ENCODE measurements at regions of chr3 and their contacts with region 1.

Region 1: GRCh38 chr3:152524198-152525140 is 255.7 kb downstream of the MBNL1 start:
- DNase-seq: peak; percentile 73
- H3K4me3 ChIP-seq: no peak overlapping the region
- H3K27ac ChIP-seq: no peak overlapping the region
- H3K4me1 ChIP-seq: no peaks in the 10 kb centered on the region
- H3K27me3 ChIP-seq: no peaks in the 10 kb centered on the region
- CTCF ChIP-seq: peak; percentile 48 to 54
- POLR2A ChIP-seq: no peak

Region 2: DNA sequence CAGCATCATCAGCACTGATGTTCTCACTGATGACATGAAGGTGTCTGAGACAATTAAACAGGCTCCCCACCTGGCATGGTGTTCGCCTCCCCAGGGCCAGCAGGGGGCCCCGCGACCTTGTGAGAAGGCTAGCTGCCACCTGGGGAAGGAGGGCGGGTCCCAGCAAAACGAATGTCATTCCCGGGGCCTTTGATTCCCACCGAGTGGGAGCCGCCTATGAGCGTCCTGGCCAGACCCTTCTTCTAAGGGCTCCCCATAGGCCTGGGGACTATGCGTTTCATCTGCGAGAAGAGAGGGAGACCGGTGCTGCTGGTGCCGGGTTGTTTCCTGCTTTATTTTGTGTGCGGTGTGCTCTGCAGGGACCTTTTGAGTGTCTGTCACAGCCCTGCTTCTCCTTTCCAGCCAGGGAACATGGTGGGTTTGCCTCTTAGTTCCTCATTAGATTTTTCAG is 1598.7 kb before region 1 on chr3:
- CTCF ChIA-PET with region 1: no interaction called
- POLR2A ChIA-PET with region 1: no interaction called
- dilution Hi-C with region 1: no loop called
- intact Hi-C with region 1: no loop called
- DNase-seq: peak; percentile 16
- H3K4me3 ChIP-seq: no peak overlapping the region
- H3K27ac ChIP-seq: no peak overlapping the region
- H3K4me1 ChIP-seq: no peaks in the 10 kb centered on the region
- H3K27me3 ChIP-seq: peaks cover 5 to 11% of the 10 kb centered on the region in 2 experiments
- CTCF ChIP-seq: peak; percentile 62 to 73
- POLR2A ChIP-seq: no peak

Region 3: DNA sequence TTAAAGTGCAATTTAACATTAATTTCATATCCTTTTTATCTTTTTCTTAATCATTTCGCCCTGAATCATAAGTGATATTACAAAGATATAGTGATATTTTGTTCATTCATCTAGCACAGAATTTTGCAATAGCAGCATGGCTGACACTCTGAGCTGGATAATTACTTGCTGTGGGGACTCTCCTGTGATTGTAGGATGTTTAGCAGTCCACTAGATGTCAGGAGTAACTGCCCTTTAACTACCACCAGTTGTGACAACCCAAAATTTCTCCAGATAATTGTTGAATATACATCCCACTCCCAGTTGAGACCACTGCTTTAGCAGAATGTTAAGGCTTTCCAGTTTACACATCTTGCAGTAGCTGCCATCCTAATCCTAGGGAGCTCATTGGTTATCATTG is 452.5 kb before region 1 on chr3:
- CTCF ChIA-PET with region 1: interaction called, 12 read pairs
- POLR2A ChIA-PET with region 1: no interaction called
- dilution Hi-C with region 1: no loop called
- intact Hi-C with region 1: loop called (anchors 5 kb)
- DNase-seq: peak; percentile 50
- H3K4me3 ChIP-seq: no peak overlapping the region
- H3K27ac ChIP-seq: no peak overlapping the region
- H3K4me1 ChIP-seq: peaks cover 4% of the 10 kb centered on the region
- H3K27me3 ChIP-seq: no peaks in the 10 kb centered on the region
- CTCF ChIP-seq: peak; percentile 37 to 40
- POLR2A ChIP-seq: no peak

Region 4: GRCh38 chr3:152302521-152303021 is 221.9 kb before region 1 on chr3:
- CTCF ChIA-PET with region 1: no interaction called
- POLR2A ChIA-PET with region 1: no interaction called
- dilution Hi-C with region 1: no loop called
- intact Hi-C with region 1: no loop called
- DNase-seq: peak; percentile 24
- H3K4me3 ChIP-seq: no peak overlapping the region
- H3K27ac ChIP-seq: no peak overlapping the region
- H3K4me1 ChIP-seq: peaks cover 65% of the 10 kb centered on the region
- H3K27me3 ChIP-seq: no peaks in the 10 kb centered on the region
- CTCF ChIP-seq: no peak
- POLR2A ChIP-seq: no peak

Region 5: DNA sequence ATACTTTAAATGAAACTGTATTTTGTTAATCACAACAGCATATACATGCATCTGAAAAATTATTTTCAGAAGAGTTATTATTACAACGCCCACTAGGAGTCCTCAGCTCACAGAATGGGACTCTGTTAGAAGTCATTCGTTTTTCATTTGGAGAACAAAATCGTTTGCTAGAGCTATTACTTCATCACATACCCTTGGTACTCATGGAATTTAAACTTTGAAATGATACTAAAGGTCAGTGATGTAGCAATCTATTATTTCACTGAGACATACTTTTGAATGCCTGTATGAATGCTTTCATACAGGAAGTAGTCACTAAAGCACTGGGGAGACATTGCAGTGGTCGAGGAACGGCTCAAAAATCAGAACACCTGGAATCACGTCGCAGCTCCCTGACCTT is 57.7 kb before region 1 on chr3:
- CTCF ChIA-PET with region 1: interaction called, 30 read pairs
- POLR2A ChIA-PET with region 1: no interaction called
- dilution Hi-C with region 1: no loop called
- intact Hi-C with region 1: no loop called
- DNase-seq: peak; percentile 49
- H3K4me3 ChIP-seq: no peak overlapping the region
- H3K27ac ChIP-seq: no peak overlapping the region
- H3K4me1 ChIP-seq: no peaks in the 10 kb centered on the region
- H3K27me3 ChIP-seq: no peaks in the 10 kb centered on the region
- CTCF ChIP-seq: peak; percentile 26 to 44
- POLR2A ChIP-seq: no peak

Region 6: GRCh38 chr3:152471814-152472671 is 52.4 kb before region 1 on chr3:
- CTCF ChIA-PET with region 1: interaction called, 30 read pairs
- POLR2A ChIA-PET with region 1: no interaction called
- dilution Hi-C with region 1: no loop called
- intact Hi-C with region 1: loop called (anchors 1 kb)
- DNase-seq: peak; percentile 76
- H3K4me3 ChIP-seq: no peak overlapping the region
- H3K27ac ChIP-seq: peak overlapping the region; percentile 13
- H3K4me1 ChIP-seq: no peaks in the 10 kb centered on the region
- H3K27me3 ChIP-seq: no peaks in the 10 kb centered on the region
- CTCF ChIP-seq: peak; percentile 54 to 63
- POLR2A ChIP-seq: no peak

Region 7: GRCh38 chr3:152499791-152500385 is 24.6 kb before region 1 on chr3:
- CTCF ChIA-PET with region 1: interaction called, 25 read pairs
- POLR2A ChIA-PET with region 1: no interaction called
- dilution Hi-C with region 1: no loop called
- intact Hi-C with region 1: no loop called
- DNase-seq: peak; percentile 70
- H3K4me3 ChIP-seq: no peak overlapping the region
- H3K27ac ChIP-seq: no peak overlapping the region
- H3K4me1 ChIP-seq: peaks cover 18% of the 10 kb centered on the region
- H3K27me3 ChIP-seq: no peaks in the 10 kb centered on the region
- CTCF ChIP-seq: no peak
- POLR2A ChIP-seq: no peak

Region 8: DNA sequence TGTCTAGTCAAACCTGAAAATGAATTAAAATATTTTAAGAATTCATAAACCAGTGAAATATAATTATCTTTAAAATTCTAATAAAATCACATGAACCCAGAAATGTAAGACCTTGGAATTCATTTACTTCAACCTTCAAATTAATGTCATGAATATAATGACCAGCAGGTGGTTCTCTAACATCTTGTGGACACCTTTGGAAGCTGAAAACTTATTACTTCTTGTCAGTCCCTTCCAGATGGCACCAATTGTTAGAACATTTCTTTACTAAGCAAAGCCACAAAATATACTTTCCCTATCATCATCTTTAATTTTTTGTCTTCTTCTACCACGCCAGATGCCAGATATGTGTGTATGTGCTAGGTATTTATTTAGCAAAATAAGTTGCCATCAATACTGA is 15.8 kb before region 1 on chr3:
- CTCF ChIA-PET with region 1: interaction called, 70 read pairs
- POLR2A ChIA-PET with region 1: no interaction called
- dilution Hi-C with region 1: no loop called
- intact Hi-C with region 1: no loop called
- DNase-seq: peak; percentile 44
- H3K4me3 ChIP-seq: no peak overlapping the region
- H3K27ac ChIP-seq: no peak overlapping the region
- H3K4me1 ChIP-seq: peaks cover 3% of the 10 kb centered on the region
- H3K27me3 ChIP-seq: no peaks in the 10 kb centered on the region
- CTCF ChIP-seq: no peak
- POLR2A ChIP-seq: no peak

Region 9: DNA sequence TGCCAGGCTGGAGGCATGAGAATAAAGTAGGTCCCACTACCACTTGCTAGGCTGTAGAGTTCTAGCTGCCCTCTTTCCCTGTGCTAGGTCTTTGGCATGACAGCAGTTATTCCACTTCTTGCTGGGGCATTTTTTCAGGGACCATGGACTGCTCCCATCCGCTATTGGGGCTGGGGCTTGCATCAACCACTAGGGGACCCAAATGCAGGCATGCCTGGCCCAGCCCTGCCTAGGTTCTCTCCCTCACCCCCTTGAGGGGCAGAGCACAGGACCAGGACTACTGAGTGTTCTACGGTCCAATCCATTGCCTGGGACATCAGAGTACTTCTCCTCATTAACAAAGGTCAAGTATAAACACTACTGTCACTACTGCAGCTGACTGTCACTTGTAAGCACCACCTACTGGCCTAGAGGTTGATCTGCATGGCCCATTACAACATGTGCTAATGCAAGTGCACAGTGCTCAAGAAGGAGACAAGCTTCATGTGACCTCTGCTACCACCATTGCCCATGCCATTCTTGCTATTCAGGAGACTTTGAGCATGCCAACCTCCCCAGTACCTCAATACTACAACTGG is 14.8 kb after region 1 on chr3:
- CTCF ChIA-PET with region 1: interaction called, 13 read pairs
- POLR2A ChIA-PET with region 1: no interaction called
- dilution Hi-C with region 1: no loop called
- intact Hi-C with region 1: no loop called
- DNase-seq: no peak
- H3K4me3 ChIP-seq: no peak overlapping the region
- H3K27ac ChIP-seq: no peak overlapping the region
- H3K4me1 ChIP-seq: no peaks in the 10 kb centered on the region
- H3K27me3 ChIP-seq: no peaks in the 10 kb centered on the region
- CTCF ChIP-seq: peak; percentile 11 to 18
- POLR2A ChIP-seq: no peak

Measured in endothelial cell of umbilical vein (primary cell).